ENCODE measurements at regions of chr1 and their contacts with region 1.

Region 1: DNA sequence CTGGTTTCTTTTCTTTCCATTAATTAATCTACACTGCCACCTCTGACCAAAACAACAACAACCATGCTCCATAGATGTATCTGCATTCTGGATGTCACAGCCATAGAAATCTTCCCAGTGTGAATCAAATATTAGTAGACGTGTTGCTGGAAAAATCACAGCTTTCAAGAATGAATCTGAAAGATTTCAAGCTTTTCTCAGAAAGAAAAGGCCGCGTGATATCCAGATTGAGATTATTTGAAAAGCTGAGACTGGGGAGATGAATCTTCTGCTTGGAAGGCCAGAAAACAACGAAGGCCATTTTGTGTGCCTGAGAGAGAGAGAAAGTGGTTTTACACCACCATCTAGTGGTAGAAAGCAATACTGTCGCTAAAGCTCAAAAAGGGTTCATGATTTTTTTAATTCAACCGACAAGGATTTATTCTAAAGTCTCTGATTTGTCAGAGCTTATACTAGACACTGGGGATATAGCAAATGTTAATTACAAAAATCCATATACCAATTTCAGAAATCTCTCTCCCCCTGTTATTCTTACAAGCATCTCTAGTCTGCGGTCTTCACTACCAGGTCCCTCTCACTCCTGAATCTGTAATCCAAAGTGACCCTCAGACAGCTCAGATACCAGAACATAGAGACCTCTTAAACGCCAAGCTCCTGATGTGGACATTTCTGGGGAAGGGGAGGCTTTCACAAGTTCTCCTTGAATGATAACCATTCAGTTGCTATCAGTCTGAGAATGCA is 87.5 kb upstream of the SGIP1 start:
- DNase-seq: peak; percentile 39
- H3K4me3 Mint-ChIP-seq: peak overlapping the region; percentile 56
- H3K27ac Mint-ChIP-seq: peak overlapping the region; percentile 95
- H3K4me1 Mint-ChIP-seq: peaks cover 32% of the 10 kb centered on the region
- H3K27me3 Mint-ChIP-seq: peaks cover 3% of the 10 kb centered on the region

Region 2: DNA sequence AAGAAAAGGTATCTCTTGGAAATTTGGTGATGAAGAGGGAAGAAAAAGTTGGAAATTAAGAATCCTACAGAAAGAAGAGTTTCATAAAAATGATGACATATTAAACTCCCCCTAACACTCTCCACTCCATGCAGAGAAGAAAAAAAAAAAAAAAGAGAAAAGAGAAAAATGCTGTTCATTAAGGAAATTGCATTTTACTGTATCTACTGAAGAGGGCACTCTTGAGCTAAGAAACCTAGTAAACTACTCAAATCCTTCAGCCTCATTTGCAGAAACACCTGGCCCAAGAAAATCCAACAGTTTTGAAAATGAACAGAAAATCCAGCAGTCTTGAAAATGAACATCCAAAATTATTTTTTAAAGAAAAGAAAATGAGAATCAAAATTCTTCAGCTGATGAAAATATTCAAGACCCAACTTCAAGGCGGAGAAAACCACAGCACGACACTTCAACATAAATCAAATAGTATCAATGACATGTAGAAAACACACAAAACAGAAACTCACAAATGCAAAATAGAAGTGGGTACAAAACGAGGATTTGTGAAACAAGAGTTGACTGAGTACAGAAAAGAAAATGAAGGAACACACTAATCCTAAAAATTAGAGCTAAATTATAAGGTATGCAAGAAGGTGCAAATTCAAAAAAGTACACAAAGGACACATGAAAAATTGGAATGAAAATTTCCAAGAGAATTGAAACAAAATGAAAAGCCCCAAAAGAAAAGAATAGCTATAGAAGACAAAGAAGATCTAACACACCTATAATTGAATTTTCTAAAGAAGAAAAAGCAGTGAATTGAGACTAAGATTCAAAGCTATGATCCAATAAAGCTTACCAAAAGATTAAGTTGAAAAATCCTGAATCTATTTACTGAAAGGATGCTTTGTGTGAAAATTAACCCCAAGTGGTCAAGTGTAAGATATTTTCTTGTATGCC is 1210.3 kb before region 1 on chr1:
- intact Hi-C with region 1: loop called (anchors 10 kb)
- DNase-seq: no peak
- H3K4me3 Mint-ChIP-seq: no peak overlapping the region
- H3K27ac Mint-ChIP-seq: no peak overlapping the region
- H3K4me1 Mint-ChIP-seq: peaks cover 15% of the 10 kb centered on the region
- H3K27me3 Mint-ChIP-seq: peaks cover 2% of the 10 kb centered on the region

Region 3: GRCh38 chr1:65717815-65718454 is 728.5 kb before region 1 on chr1:
- intact Hi-C with region 1: loop called (anchors 5 kb)
- DNase-seq: no peak
- H3K4me3 Mint-ChIP-seq: no peak overlapping the region
- H3K27ac Mint-ChIP-seq: no peak overlapping the region
- H3K4me1 Mint-ChIP-seq: no peaks in the 10 kb centered on the region
- H3K27me3 Mint-ChIP-seq: peaks cover 29% of the 10 kb centered on the region

Region 4: DNA sequence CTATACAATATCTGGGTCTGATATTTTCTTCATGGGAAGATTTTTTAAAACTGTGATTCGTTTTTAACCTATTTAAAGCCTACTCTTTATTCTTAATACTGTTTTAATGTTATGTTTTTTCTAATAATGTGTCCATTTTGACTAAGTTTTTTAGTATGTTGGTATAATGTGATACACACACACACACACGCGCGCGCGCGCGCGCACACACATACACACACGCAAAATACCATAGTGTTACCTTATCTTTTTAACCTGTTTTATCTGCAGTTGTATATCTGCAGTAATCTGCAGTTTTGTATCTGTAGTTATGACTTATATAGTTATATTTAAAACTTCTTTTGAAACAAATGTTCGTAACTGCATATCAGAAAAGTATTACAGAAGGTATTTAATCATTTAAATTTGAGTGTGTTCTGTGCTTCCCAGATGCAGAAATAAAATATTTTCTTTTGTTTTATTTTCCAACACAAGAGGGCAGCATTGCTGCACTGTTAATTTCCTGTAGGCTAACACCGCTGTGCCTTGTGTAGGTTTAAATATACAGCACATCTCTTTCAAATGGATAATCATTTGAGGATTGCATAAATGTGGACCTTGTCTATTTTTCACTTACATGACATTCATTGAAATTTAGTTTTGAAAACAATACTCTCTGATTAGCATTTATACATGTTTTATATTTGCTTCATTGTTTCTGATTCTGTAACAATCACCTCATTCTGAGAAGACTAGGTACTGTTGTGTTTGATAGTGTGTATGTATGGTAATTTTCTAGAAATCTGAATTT is 487.7 kb before region 1 on chr1:
- intact Hi-C with region 1: loop called (anchors 1 kb)
- DNase-seq: peak; percentile 10
- H3K4me3 Mint-ChIP-seq: no peak overlapping the region
- H3K27ac Mint-ChIP-seq: no peak overlapping the region
- H3K4me1 Mint-ChIP-seq: peaks cover 14% of the 10 kb centered on the region
- H3K27me3 Mint-ChIP-seq: peaks cover 2% of the 10 kb centered on the region

Region 5: DNA sequence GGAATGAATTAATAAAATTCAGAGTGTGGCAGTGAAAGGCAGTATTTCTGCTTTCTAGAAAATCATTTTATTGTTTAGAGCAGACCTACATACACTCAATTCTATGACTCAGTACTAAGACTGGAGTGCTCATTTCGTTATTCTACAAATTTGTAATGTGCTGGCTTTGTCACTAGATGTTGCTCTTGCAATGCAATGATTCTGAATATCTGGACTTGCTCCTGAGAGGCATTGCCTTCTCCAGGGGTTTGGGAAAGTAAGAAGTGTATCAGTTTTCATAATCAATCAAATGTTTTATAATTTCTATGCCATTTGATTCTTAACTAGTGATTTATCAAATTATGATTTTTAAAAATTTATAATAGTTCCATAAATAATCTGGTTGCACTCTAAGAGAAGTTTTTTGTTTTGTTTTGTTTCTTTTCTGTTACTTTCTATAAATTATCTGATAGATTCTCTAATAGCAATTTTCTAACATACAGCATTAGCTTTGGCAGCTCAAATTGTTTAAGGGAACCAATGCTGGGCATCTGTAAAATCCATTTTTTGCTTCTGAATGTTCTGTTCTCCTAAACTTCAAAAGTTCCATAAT is 193.0 kb before region 1 on chr1:
- intact Hi-C with region 1: loop called (anchors 1 kb)
- DNase-seq: no peak
- H3K4me3 Mint-ChIP-seq: no peak overlapping the region
- H3K27ac Mint-ChIP-seq: no peak overlapping the region
- H3K4me1 Mint-ChIP-seq: peaks cover 68% of the 10 kb centered on the region
- H3K27me3 Mint-ChIP-seq: no peaks in the 10 kb centered on the region

Region 6: GRCh38 chr1:66360285-66360724 is 86.1 kb before region 1 on chr1:
- intact Hi-C with region 1: no loop called
- DNase-seq: no peak
- H3K4me3 Mint-ChIP-seq: no peak overlapping the region
- H3K27ac Mint-ChIP-seq: peak overlapping the region; percentile 26
- H3K4me1 Mint-ChIP-seq: peaks cover 86% of the 10 kb centered on the region
- H3K27me3 Mint-ChIP-seq: no peaks in the 10 kb centered on the region

Region 7: GRCh38 chr1:66725885-66726665 is 279.6 kb after region 1 on chr1:
- intact Hi-C with region 1: loop called (anchors 2 kb)
- DNase-seq: peak; percentile 54
- H3K4me3 Mint-ChIP-seq: no peak overlapping the region
- H3K27ac Mint-ChIP-seq: no peak overlapping the region
- H3K4me1 Mint-ChIP-seq: peaks cover 19% of the 10 kb centered on the region
- H3K27me3 Mint-ChIP-seq: peaks cover 12% of the 10 kb centered on the region